Transverse colon (tissue), 4 donors: ENCODE measurements at regions of chr10 and their contacts with region 1.

Region 1: GRCh38 chr10:52561322-52561721 is 211.3 kb downstream of the MBL2 start:
- DNase-seq: no peak
- H3K4me3 ChIP-seq: no peak overlapping the region
- H3K27ac ChIP-seq: no peak overlapping the region
- H3K4me1 ChIP-seq: no peaks in the 10 kb centered on the region
- H3K27me3 ChIP-seq: no peaks in the 10 kb centered on the region
- CTCF ChIP-seq: no peak
- EP300 ChIP-seq: no peak
- POLR2A ChIP-seq: no peak

Region 2: GRCh38 chr10:52578871-52579405 is 17.6 kb after region 1 on chr10:
- in situ Hi-C with region 1: no loop called
- intact Hi-C with region 1: loop called (anchors 1 kb)
- DNase-seq: no peak
- H3K4me3 ChIP-seq: no peak overlapping the region
- H3K27ac ChIP-seq: no peak overlapping the region
- H3K4me1 ChIP-seq: no peaks in the 10 kb centered on the region
- H3K27me3 ChIP-seq: no peaks in the 10 kb centered on the region
- CTCF ChIP-seq: no peak
- EP300 ChIP-seq: no peak
- POLR2A ChIP-seq: no peak